ENCODE measurements at regions of chr12 and their contacts with region 1.

Region 1: GRCh38 chr12:48946205-48946604 is 11.1 kb downstream of the ARF3 start:
- DNase-seq: no peak
- H3K4me3 ChIP-seq: no peak overlapping the region
- H3K27ac ChIP-seq: no peak overlapping the region
- H3K4me1 ChIP-seq: no peaks in the 10 kb centered on the region
- H3K27me3 ChIP-seq: no peaks in the 10 kb centered on the region
- CTCF ChIP-seq: no peak
- EP300 ChIP-seq: no peak
- RAD21 ChIP-seq: no peak

Region 2: DNA sequence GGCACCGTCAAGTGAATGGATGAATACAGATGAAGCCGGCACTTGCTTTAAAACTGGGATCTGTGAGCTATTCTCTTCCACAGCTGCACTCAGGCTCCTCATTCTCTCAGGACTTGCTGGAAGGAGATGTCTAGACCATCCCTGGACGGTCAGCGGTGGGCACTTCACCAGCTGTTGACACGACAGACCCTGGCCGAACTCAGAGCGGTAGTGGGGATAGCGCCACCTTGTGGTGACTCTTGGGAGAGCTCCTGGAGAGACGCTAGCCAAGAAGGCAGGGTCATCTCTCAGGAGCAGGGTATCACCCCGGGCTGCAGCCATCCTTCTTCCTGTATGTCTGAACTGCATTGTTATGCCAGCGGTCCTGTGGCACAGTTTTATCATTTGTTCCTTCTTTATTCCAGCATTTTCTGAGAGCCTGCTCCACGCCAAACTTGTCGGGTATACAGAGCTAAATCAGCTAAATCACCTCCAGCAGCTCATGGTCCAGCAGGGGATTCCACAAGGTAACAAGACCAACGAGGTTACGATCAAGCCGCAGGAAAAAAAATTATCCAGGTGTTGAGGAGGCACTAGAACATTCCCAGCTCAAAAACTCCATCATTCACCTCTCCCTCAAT is 41.9 kb after region 1 on chr12:
- CTCF ChIA-PET with region 1: interaction called, 14 read pairs
- POLR2A ChIA-PET with region 1: no interaction called
- DNase-seq: peak; percentile 87
- H3K4me3 ChIP-seq: no peak overlapping the region; a peak in 1 of 4 replicates
- H3K27ac ChIP-seq: no peak overlapping the region
- H3K4me1 ChIP-seq: no peaks in the 10 kb centered on the region
- H3K27me3 ChIP-seq: peaks cover 32% of the 10 kb centered on the region
- CTCF ChIP-seq: peak; percentile 88
- EP300 ChIP-seq: no peak
- RAD21 ChIP-seq: peak; percentile 49

Measured in SK-N-SH (cell line).